Right ventricle myocardium superior (tissue), 1 donor: ENCODE measurements at regions of chr1 and their contacts with region 1.

Region 1: GRCh38 chr1:16078925-16079656 is 5.6 kb upstream of the FAM131C start:
- DNase-seq: peak; percentile 84
- ATAC-seq: peak; percentile 73

Region 2: GRCh38 chr1:16155532-16156410 is 76.7 kb after region 1 on chr1 and contains the start of gene EPHA2:
- intact Hi-C with region 1: loop called (anchors 2 kb)
- DNase-seq: peak; percentile 95
- ATAC-seq: peak; percentile 83
- total RNA-seq, gene EPHA2: 7.3 TPM

Region 3: DNA sequence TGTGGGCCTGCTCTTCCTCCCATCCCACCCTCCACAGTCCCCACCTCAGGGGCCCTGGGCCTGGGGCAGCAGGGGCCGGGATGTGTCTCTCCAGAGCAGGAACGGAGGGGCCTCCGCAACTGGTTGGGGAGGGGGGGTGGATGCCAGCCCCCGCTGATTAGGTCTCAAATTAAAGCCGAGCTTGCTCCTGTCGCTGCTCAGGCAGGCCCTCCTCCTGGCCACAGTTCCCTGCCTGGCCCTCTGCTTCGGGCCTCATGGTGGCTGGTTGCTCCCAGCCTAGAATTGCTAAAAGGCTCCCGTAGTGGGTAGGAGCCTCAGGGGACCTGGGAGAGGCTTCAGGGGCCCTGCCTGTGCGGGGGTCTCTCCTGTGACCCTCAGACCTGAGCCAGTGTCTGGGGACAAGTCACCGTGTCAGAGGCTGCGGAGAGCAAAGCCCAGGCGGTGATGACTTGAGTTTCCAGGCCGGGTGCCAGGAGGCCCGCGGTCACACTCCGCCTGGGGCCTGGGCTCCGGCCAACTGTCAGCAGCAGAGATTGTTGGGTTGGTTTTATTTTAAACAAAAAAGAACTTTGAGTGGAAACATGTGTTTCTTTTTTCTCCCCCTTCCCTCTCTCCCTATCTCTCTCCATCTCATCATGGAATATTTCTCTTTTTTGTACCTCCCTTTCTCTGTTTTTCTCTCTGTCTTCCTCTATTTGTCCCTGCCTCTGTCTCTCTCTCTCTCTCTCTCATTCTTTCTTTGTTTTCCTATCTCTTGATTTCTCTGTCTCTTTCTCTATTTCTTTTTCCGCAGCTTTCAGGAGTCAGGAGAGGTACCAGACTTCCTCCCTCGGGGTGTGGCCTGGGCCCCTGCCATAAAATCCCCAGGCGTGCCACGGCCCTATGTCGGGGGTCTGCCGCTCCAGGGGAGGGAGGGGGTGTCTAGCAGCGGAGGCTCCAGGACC is 96.8 kb after region 1 on chr1:
- intact Hi-C with region 1: no loop called
- DNase-seq: peak; percentile 95
- ATAC-seq: peak; percentile 92

Region 4: DNA sequence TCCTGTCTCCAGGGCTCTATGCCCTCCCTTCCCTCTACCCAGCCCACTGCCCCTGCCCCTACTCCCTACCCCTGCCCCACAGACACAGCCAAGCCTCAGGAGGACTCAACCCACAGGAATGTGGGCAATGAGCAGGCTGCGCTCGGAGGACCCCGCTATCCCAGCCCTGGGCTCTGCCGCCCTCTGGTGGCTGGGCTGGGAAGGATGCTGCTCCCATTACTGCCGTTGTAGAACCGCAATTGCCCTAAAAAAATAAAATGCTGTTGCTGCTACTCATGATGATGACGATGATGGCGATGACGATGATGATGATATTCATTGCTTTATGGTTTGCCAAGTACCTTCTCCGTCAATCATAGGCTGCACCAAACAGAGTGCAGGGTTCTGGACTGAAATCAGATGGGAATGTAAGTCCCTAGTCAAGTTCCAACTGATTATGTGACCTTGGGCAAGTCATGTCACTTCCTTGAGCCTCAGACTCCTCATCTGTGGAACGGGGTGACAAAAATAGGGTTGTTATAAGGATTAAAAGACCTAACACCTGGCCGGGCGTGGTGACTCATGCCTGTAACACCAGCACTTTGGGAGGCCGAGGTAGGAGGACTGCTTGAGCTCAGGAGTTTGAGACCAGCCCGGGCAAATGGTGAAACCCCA is 108.8 kb after region 1 on chr1:
- intact Hi-C with region 1: loop called (anchors 1 kb)
- DNase-seq: peak; percentile 89
- ATAC-seq: peak; percentile 88

Region 5: DNA sequence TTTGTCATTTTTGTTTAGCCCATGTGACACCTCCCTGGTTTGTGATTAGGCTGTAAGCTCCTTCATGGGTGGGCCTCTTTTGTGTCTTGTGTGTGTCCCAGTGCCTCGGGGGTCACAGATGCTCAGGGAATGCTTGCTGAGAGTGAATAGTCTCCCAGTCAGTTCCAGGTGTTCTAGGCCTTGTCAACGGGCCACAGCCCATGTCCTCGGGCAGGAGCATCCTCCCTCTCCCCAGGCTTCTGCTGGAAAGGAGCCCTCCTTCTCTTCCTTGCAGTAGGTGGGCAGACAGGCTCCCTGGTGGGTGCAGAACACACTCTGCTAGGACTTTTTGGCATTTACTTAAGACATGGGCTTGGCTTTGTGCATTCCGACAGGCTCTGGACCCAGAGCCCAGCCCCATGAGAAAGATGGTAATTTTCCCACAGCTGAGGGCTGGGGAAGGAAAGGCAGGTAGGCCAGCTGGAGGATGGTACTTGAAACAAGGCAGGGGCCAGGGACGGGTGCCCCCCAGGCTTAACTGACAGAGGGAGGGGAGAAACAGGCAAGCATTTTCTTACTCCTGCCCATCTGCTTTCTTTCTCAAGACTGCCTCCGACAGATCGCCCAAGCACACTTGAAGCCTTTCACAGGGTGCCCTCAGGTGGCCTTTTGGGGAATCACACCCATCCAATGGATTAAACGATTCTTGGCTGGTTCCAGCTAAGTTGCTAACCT is 165.0 kb after region 1 on chr1:
- intact Hi-C with region 1: loop called (anchors 5 kb)
- DNase-seq: peak; percentile 80
- ATAC-seq: peak; percentile 34

Region 6: GRCh38 chr1:16351994-16352841 is 273.1 kb after region 1 on chr1 and contains the start of gene FBXO42:
- intact Hi-C with region 1: loop called (anchors 5 kb)
- DNase-seq: peak; percentile 96
- ATAC-seq: peak; percentile 97
- total RNA-seq, gene FBXO42: 17.1 TPM